T-cell (primary cell): ENCODE measurements at regions of chr4 and their contacts with region 1.

Region 1: DNA sequence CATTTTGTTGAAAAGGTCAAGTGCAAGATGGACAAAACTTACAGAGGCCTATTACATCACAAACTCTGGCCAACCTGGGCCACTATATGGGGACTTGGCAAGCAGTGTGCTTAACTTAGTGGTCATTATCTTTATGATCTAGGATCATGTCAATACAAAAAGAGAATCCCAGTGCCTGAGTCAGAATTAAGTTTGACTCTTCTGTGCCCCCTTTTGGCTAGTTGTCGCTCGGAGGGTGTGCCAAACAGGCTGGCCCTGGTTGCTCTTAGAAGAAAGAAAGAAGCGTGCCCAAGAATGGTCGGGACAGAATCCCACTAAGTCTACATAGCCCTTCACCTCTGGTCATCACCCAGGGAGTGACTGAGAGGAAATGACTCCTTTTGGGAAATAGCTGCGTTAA is 100.1 kb downstream of the EIF4E start:
- DNase-seq: peak in 28 of 35 experiments; percentile 0 to 52 (median 16)
- ATAC-seq: peak in 2 of 4 experiments; percentile 46 to 51
- H3K4me3 ChIP-seq: no peak overlapping the region
- H3K4me3 Mint-ChIP-seq: no peak overlapping the region
- H3K27ac ChIP-seq: no peak overlapping the region
- H3K27ac Mint-ChIP-seq: no peak overlapping the region
- H3K4me1 ChIP-seq: no peaks in the 10 kb centered on the region
- H3K4me1 Mint-ChIP-seq: no peaks in the 10 kb centered on the region
- H3K27me3 ChIP-seq: no peaks in the 10 kb centered on the region
- H3K27me3 Mint-ChIP-seq: no peaks in the 10 kb centered on the region

Region 2: DNA sequence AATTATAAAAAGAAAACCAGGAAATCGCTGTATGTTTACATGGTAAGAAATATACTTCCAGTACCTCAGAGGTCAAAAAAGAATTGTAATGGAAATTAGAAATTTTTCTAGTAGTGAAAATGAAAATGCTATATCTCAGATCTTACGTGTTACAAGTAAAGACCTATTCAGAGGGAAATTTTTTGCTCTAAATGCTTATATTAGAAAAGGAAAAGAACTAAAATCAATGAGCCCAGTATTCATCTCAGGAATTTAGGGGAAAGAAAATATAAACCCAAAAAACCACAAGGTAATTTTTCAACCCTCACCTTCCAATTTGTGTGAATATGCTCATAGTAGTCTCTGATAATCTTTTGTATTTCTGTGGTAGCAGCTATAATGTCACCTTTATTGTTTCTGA is 422.0 kb before region 1 on chr4:
- CTCF ChIA-PET with region 1: no interaction called
- POLR2A ChIA-PET with region 1: no interaction called
- DNase-seq: no peak
- ATAC-seq: no peak
- H3K4me3 ChIP-seq: no peak overlapping the region
- H3K4me3 Mint-ChIP-seq: no peak overlapping the region
- H3K27ac ChIP-seq: no peak overlapping the region
- H3K27ac Mint-ChIP-seq: no peak overlapping the region
- H3K4me1 ChIP-seq: no peaks in the 10 kb centered on the region
- H3K4me1 Mint-ChIP-seq: no peaks in the 10 kb centered on the region
- H3K27me3 ChIP-seq: no peaks in the 10 kb centered on the region
- H3K27me3 Mint-ChIP-seq: no peaks in the 10 kb centered on the region

Region 3: GRCh38 chr4:98518559-98519267 is 310.1 kb before region 1 on chr4:
- CTCF ChIA-PET with region 1: interaction called in 1 of 2 experiments, 11 read pairs
- POLR2A ChIA-PET with region 1: no interaction called
- DNase-seq: no peak
- ATAC-seq: no peak
- H3K4me3 ChIP-seq: no peak overlapping the region
- H3K4me3 Mint-ChIP-seq: no peak overlapping the region
- H3K27ac ChIP-seq: no peak overlapping the region
- H3K27ac Mint-ChIP-seq: peak overlapping the region; percentile 36 to 37
- H3K4me1 ChIP-seq: peaks cover 0 to 14% of the 10 kb centered on the region in 2 experiments
- H3K4me1 Mint-ChIP-seq: peaks cover 53 to 55% (median 54%) of the 10 kb centered on the region in 3 donors
- H3K27me3 ChIP-seq: no peaks in the 10 kb centered on the region
- H3K27me3 Mint-ChIP-seq: no peaks in the 10 kb centered on the region

Region 4: GRCh38 chr4:100707786-100708185 is 1879.0 kb after region 1 on chr4:
- CTCF ChIA-PET with region 1: no interaction called
- POLR2A ChIA-PET with region 1: no interaction called
- DNase-seq: no peak
- ATAC-seq: no peak
- H3K4me3 ChIP-seq: no peak overlapping the region
- H3K4me3 Mint-ChIP-seq: no peak overlapping the region
- H3K27ac ChIP-seq: no peak overlapping the region
- H3K27ac Mint-ChIP-seq: no peak overlapping the region
- H3K4me1 ChIP-seq: no peaks in the 10 kb centered on the region
- H3K4me1 Mint-ChIP-seq: no peaks in the 10 kb centered on the region
- H3K27me3 ChIP-seq: no peaks in the 10 kb centered on the region
- H3K27me3 Mint-ChIP-seq: no peaks in the 10 kb centered on the region